ENCODE measurements at regions of chr4 and their contacts with region 1.

Region 1: DNA sequence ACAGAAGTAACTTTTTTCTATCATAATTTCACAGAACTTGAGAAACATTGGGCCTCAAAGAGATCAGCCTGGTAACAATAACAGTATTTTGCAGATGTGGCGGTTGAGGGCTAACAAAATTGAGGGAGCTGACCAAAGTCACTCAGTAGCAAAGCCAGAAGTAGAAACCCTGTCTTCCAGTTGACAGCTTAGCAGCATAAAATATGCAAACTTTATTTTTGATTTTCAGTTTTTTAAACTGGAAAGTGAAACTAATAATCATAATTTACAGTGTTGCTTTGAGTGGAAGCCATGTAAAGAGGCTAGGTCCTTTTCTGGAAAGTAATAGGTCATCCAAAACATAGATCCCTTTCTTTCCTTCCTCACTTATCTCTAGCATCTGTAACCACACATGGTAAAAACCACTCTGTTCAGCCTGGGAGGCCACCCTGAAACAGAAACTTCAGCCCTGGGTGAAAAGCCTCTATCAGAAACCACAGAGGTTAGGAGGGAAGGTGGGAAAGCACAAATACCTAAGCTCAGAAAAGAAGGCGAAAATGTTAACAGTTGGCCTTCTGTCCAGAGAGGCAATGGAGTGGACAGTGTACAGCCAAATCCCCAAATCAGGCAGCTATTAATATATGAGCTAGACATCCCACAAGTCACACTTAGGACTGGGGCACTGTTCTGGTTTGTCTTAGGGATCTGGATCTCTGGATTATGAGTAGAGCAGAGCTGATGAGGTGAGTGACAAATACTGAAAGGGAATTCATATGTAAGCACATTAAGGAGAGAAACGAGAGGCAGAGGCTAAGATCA is 61.1 kb upstream of the ARSJ start:
- DNase-seq: peak; percentile 36
- ATAC-seq: peak; percentile 90
- H3K4me3 ChIP-seq: no peak overlapping the region
- H3K27ac ChIP-seq: no peak overlapping the region
- H3K4me1 ChIP-seq: peaks cover 14% of the 10 kb centered on the region
- H3K27me3 ChIP-seq: no peaks in the 10 kb centered on the region
- CTCF ChIP-seq: no peak
- EP300 ChIP-seq: no peak
- POLR2A ChIP-seq: no peak
- RAD21 ChIP-seq: no peak

Region 2: GRCh38 chr4:114025176-114025777 is 15.2 kb before region 1 on chr4:
- CTCF ChIA-PET with region 1: interaction called, 6 read pairs
- POLR2A ChIA-PET with region 1: interaction called, 6 read pairs
- RAD21 ChIA-PET with region 1: interaction called, 16 read pairs
- SMC1A ChIA-PET with region 1: interaction called, 38 read pairs
- in situ Hi-C with region 1: no loop called
- intact Hi-C with region 1: no loop called
- DNase-seq: peak; percentile 33
- ATAC-seq: peak; percentile 92
- H3K4me3 ChIP-seq: no peak overlapping the region
- H3K27ac ChIP-seq: no peak overlapping the region
- H3K4me1 ChIP-seq: peaks cover 4% of the 10 kb centered on the region
- H3K27me3 ChIP-seq: no peaks in the 10 kb centered on the region
- CTCF ChIP-seq: no peak
- EP300 ChIP-seq: peak in 1 of 2 experiments; percentile 70; a peak in 1 of 4 replicates
- POLR2A ChIP-seq: no peak
- RAD21 ChIP-seq: no peak

Measured in GM12878 (cell line).